IMR-90 (cell line): ENCODE measurements at regions of chr18 and their contacts with region 1.

Region 1: GRCh38 chr18:67776929-67777328 is 260.4 kb upstream of the DSEL start:
- DNase-seq: peak; percentile 30
- ATAC-seq: no peak
- H3K4me3 ChIP-seq: no peak overlapping the region
- H3K27ac ChIP-seq: no peak overlapping the region
- H3K4me1 ChIP-seq: peaks cover 2% of the 10 kb centered on the region; the same call in 1 of the 2 replicates
- H3K27me3 ChIP-seq: no peaks in the 10 kb centered on the region
- CTCF ChIP-seq: no peak
- POLR2A ChIP-seq: no peak
- RAD21 ChIP-seq: no peak

Region 2: GRCh38 chr18:67525328-67526099 is 251.4 kb before region 1 on chr18:
- CTCF ChIA-PET with region 1: no interaction called
- POLR2A ChIA-PET with region 1: no interaction called
- dilution Hi-C with region 1: no loop called
- in situ Hi-C with region 1: no loop called
- intact Hi-C with region 1: no loop called
- DNase-seq: peak; percentile 99
- ATAC-seq: peak; percentile 95
- H3K4me3 ChIP-seq: no peak overlapping the region
- H3K27ac ChIP-seq: peak overlapping the region; percentile 61; the same call in 1 of the 2 replicates
- H3K4me1 ChIP-seq: no peaks in the 10 kb centered on the region; the same call in 1 of the 2 replicates
- H3K27me3 ChIP-seq: no peaks in the 10 kb centered on the region
- CTCF ChIP-seq: no peak
- POLR2A ChIP-seq: no peak
- RAD21 ChIP-seq: 0 out of 2 replicates have a peak, but pooled peaks have one; percentile 9

Region 3: GRCh38 chr18:67926929-67927864 is 150.3 kb after region 1 on chr18:
- CTCF ChIA-PET with region 1: no interaction called
- POLR2A ChIA-PET with region 1: no interaction called
- dilution Hi-C with region 1: no loop called
- in situ Hi-C with region 1: no loop called
- intact Hi-C with region 1: loop called (anchors 10 kb)
- DNase-seq: peak; percentile 8
- ATAC-seq: no peak
- H3K4me3 ChIP-seq: no peak overlapping the region
- H3K27ac ChIP-seq: no peak overlapping the region
- H3K4me1 ChIP-seq: peaks cover 6% of the 10 kb centered on the region
- H3K27me3 ChIP-seq: no peaks in the 10 kb centered on the region
- CTCF ChIP-seq: no peak
- POLR2A ChIP-seq: no peak
- RAD21 ChIP-seq: no peak